ENCODE measurements at regions of chrX and their contacts with region 1.

Region 1: GRCh38 chrX:48487362-48487785 is 11.4 kb downstream of the FTSJ1 start:
- DNase-seq: peak; percentile 97
- H3K4me3 ChIP-seq: no peak overlapping the region
- H3K27ac ChIP-seq: peak overlapping the region; percentile 95
- H3K4me1 ChIP-seq: peaks cover 34% of the 10 kb centered on the region
- H3K27me3 ChIP-seq: no peaks in the 10 kb centered on the region
- CTCF ChIP-seq: no peak

Region 2: DNA sequence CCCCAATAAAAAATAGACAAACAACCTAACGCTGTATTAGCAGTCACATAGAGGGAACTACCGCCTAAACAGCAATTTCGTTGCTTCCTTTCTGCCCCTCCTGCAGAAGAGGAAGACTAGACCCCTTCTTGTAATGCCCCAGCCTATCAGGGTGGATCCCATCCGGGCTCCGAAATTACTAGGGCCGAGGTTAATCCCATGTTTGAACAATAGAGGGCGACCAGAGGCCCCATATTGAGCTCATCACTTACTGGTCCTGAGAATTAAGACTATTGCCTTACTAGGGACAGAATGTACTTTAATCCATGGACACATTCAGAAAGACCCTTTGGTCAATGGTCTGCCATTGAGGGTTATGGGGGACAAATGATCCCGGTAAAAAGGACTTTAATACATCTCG is 404.2 kb before region 1 on chrX:
- CTCF ChIA-PET with region 1: no interaction called
- dilution Hi-C with region 1: loop called (anchors 10 kb)
- in situ Hi-C with region 1: loop called in 1 of 2 experiments (anchors 10 kb)
- intact Hi-C with region 1: loop called (anchors 1 kb)
- DNase-seq: peak; percentile 35
- H3K4me3 ChIP-seq: no peak overlapping the region
- H3K27ac ChIP-seq: no peak overlapping the region
- H3K4me1 ChIP-seq: peaks cover 9% of the 10 kb centered on the region
- H3K27me3 ChIP-seq: no peaks in the 10 kb centered on the region
- CTCF ChIP-seq: peak; percentile 53 to 63

Region 3: GRCh38 chrX:48508400-48509244 is 21.2 kb after region 1 on chrX and contains the start of gene PORCN:
- CTCF ChIA-PET with region 1: no interaction called
- dilution Hi-C with region 1: no loop called
- in situ Hi-C with region 1: no loop called
- intact Hi-C with region 1: loop called (anchors 2 kb)
- DNase-seq: peak; percentile 67
- H3K4me3 ChIP-seq: peak within 1 kb of the TSS; percentile 53 to 83 (median 63)
- H3K27ac ChIP-seq: peak within 1 kb of the TSS; percentile 53
- H3K4me1 ChIP-seq: peaks cover 16% of the 10 kb centered on the region
- H3K27me3 ChIP-seq: no peaks in the 10 kb centered on the region
- CTCF ChIP-seq: no peak
- total RNA-seq, gene PORCN: 36.2 to 113 TPM

Region 4: DNA sequence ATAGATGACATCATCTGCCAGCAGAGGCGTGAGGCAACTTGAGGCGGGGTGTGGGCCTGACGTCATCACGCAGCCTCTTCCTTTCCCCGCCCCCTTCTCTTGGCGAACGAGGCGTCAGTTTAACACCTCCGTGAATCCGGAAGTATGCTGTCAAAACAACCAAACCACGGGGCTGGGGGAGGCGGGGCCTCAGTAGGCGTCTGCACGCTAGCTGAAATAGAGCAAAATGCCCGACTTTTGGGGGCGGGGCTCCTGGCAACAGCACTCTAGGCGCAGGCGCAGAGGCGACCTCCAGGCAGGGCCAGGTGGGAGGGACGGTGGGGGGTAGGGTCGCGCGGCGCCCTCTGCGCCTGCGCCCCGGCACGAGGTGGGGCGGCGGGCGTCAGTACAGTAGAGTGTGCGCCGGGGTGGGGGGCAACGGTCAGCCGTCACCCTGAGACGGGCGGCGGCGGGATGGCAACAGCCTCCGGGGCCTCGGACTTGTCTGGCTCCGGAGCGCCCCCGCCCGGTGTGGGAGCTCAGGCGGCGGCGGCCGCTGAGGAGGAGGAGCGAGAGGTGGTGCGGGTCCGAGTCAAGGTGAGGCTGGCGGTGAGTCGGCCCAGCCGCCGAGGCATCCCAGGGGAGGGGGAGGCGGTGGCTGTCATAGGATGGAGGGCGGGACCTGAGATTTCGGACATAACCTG is 52.1 kb after region 1 on chrX and contains the start of gene TBC1D25:
- CTCF ChIA-PET with region 1: no interaction called
- dilution Hi-C with region 1: no loop called
- in situ Hi-C with region 1: no loop called
- intact Hi-C with region 1: loop called (anchors 1 kb)
- DNase-seq: peak; percentile 93
- H3K4me3 ChIP-seq: peak within 1 kb of the TSS; percentile 54 to 59 (median 59)
- H3K27ac ChIP-seq: peak within 1 kb of the TSS; percentile 52
- H3K4me1 ChIP-seq: peaks cover 6% of the 10 kb centered on the region
- H3K27me3 ChIP-seq: no peaks in the 10 kb centered on the region
- CTCF ChIP-seq: peak; percentile 3 to 51
- total RNA-seq, gene TBC1D25: 14.7 to 16.7 TPM

Region 5: GRCh38 chrX:48597353-48598264 is 110.2 kb after region 1 on chrX and contains the start of gene WDR13:
- CTCF ChIA-PET with region 1: no interaction called
- dilution Hi-C with region 1: no loop called
- in situ Hi-C with region 1: no loop called
- intact Hi-C with region 1: loop called (anchors 10 kb)
- DNase-seq: peak; percentile 87
- H3K4me3 ChIP-seq: peak within 1 kb of the TSS; percentile 40 to 82 (median 65)
- H3K27ac ChIP-seq: peak within 1 kb of the TSS; percentile 89
- H3K4me1 ChIP-seq: peaks cover 7% of the 10 kb centered on the region
- H3K27me3 ChIP-seq: no peaks in the 10 kb centered on the region
- CTCF ChIP-seq: no peak
- total RNA-seq, gene WDR13: 80.7 to 84.8 TPM

Region 6: GRCh38 chrX:48726596-48726995 is 239.2 kb after region 1 on chrX:
- CTCF ChIA-PET with region 1: no interaction called
- dilution Hi-C with region 1: no loop called
- in situ Hi-C with region 1: no loop called
- intact Hi-C with region 1: no loop called
- DNase-seq: no peak
- H3K4me3 ChIP-seq: no peak overlapping the region
- H3K27ac ChIP-seq: no peak overlapping the region
- H3K4me1 ChIP-seq: no peaks in the 10 kb centered on the region
- H3K27me3 ChIP-seq: no peaks in the 10 kb centered on the region
- CTCF ChIP-seq: no peak